HepG2 (cell line): ENCODE measurements at regions of chr1 and their contacts with region 1.

Region 1: GRCh38 chr1:200620273-200621131 is at the start of gene KIF14:
- DNase-seq: peak; percentile 89
- ATAC-seq: peak; percentile 100
- H3K4me3 ChIP-seq: peak within 1 kb of the TSS; percentile 79 to 95 (median 89)
- H3K27ac ChIP-seq: peak within 1 kb of the TSS; percentile 64
- H3K4me1 ChIP-seq: peaks cover 26% of the 10 kb centered on the region
- H3K27me3 ChIP-seq: no peaks in the 10 kb centered on the region; a peak in 1 of 5 replicates
- CTCF ChIP-seq: peak; percentile 7; the same call in 1 of the 2 replicates
- EP300 ChIP-seq: no peak
- POLR2A ChIP-seq: peak; percentile 59 to 61
- RAD21 ChIP-seq: no peak
- total RNA-seq, gene KIF14: 11.2 and 17.5 TPM in 2 replicates

Region 2: DNA sequence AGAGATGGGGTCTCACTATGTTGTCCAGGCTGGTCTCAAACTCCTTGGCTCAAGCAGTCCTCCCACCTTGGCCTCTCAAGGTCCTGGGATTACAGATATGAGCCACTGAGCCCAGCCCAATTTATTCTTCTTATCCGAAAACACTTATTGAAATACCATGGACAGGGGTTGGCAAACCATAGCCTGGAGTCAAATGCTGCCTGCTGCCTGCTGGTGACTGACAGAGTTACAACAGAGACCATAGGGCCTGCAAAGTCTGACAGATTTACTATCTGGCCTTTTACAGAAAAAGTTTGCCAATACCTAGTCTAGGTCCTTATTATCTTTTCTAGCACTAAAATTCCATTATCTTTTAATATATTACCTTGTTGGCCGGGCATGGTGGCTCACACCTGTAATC is 123.6 kb before region 1 on chr1:
- CTCF ChIA-PET with region 1: no interaction called
- POLR2A ChIA-PET with region 1: no interaction called
- in situ Hi-C with region 1: no loop called
- intact Hi-C with region 1: no loop called
- DNase-seq: no peak
- ATAC-seq: no peak
- H3K4me3 ChIP-seq: no peak overlapping the region
- H3K27ac ChIP-seq: no peak overlapping the region
- H3K4me1 ChIP-seq: no peaks in the 10 kb centered on the region
- H3K27me3 ChIP-seq: no peaks in the 10 kb centered on the region; a peak in 1 of 5 replicates
- CTCF ChIP-seq: no peak
- EP300 ChIP-seq: no peak
- POLR2A ChIP-seq: no peak
- RAD21 ChIP-seq: no peak

Region 3: GRCh38 chr1:200669314-200670241 is 49.1 kb after region 1 on chr1 and contains the start of gene DDX59:
- CTCF ChIA-PET with region 1: no interaction called
- POLR2A ChIA-PET with region 1: interaction called, 30 read pairs
- in situ Hi-C with region 1: no loop called
- intact Hi-C with region 1: loop called (anchors 2 kb)
- DNase-seq: peak; percentile 94
- ATAC-seq: peak; percentile 93
- H3K4me3 ChIP-seq: peak within 1 kb of the TSS; percentile 86 to 94 (median 87)
- H3K27ac ChIP-seq: peak within 1 kb of the TSS; percentile 98
- H3K4me1 ChIP-seq: peaks cover 18% of the 10 kb centered on the region
- H3K27me3 ChIP-seq: no peaks in the 10 kb centered on the region
- CTCF ChIP-seq: no peak
- EP300 ChIP-seq: peak in 1 of 2 experiments; percentile 24; a peak in 1 of 4 replicates
- POLR2A ChIP-seq: peak; percentile 46 to 85; a peak in 3 of 4 replicates
- RAD21 ChIP-seq: peak; percentile 21; the same call in 1 of the 2 replicates
- total RNA-seq, gene DDX59: 14.8 and 21.7 TPM in 2 replicates

Region 4: GRCh38 chr1:200802865-200803512 is 182.5 kb after region 1 on chr1:
- CTCF ChIA-PET with region 1: interaction called, 36 read pairs
- POLR2A ChIA-PET with region 1: no interaction called
- in situ Hi-C with region 1: loop called (anchors 5 kb)
- intact Hi-C with region 1: loop called (anchors 1 kb)
- DNase-seq: peak; percentile 71
- ATAC-seq: peak; percentile 95
- H3K4me3 ChIP-seq: no peak overlapping the region
- H3K27ac ChIP-seq: no peak overlapping the region
- H3K4me1 ChIP-seq: no peaks in the 10 kb centered on the region
- H3K27me3 ChIP-seq: no peaks in the 10 kb centered on the region
- CTCF ChIP-seq: peak; percentile 91
- EP300 ChIP-seq: no peak
- POLR2A ChIP-seq: no peak
- RAD21 ChIP-seq: peak; percentile 75

Region 5: GRCh38 chr1:200808846-200809245 is 188.3 kb after region 1 on chr1:
- CTCF ChIA-PET with region 1: interaction called, 36 read pairs
- POLR2A ChIA-PET with region 1: no interaction called
- in situ Hi-C with region 1: loop called (anchors 5 kb)
- intact Hi-C with region 1: no loop called
- DNase-seq: no peak
- ATAC-seq: no peak
- H3K4me3 ChIP-seq: no peak overlapping the region
- H3K27ac ChIP-seq: no peak overlapping the region
- H3K4me1 ChIP-seq: no peaks in the 10 kb centered on the region
- H3K27me3 ChIP-seq: no peaks in the 10 kb centered on the region
- CTCF ChIP-seq: no peak
- EP300 ChIP-seq: no peak
- POLR2A ChIP-seq: no peak
- RAD21 ChIP-seq: no peak

Region 6: GRCh38 chr1:200971955-200972711 is 351.6 kb after region 1 on chr1:
- CTCF ChIA-PET with region 1: no interaction called
- POLR2A ChIA-PET with region 1: no interaction called
- in situ Hi-C with region 1: no loop called
- intact Hi-C with region 1: loop called (anchors 5 kb)
- DNase-seq: peak; percentile 30
- ATAC-seq: peak; percentile 12; the same call in 2 of the 3 replicates
- H3K4me3 ChIP-seq: no peak overlapping the region
- H3K27ac ChIP-seq: no peak overlapping the region
- H3K4me1 ChIP-seq: 0 out of 2 replicates have a peak, but pooled peaks cover 19% of the 10 kb centered on the region
- H3K27me3 ChIP-seq: peaks cover 2 to 6% of the 10 kb centered on the region in 2 experiments; a peak in 4 of 5 replicates
- CTCF ChIP-seq: peak; percentile 67
- EP300 ChIP-seq: no peak
- POLR2A ChIP-seq: no peak
- RAD21 ChIP-seq: 0 out of 2 replicates have a peak, but pooled peaks have one; percentile 27

Region 7: GRCh38 chr1:201042779-201043461 is 422.4 kb after region 1 on chr1:
- CTCF ChIA-PET with region 1: no interaction called
- POLR2A ChIA-PET with region 1: no interaction called
- in situ Hi-C with region 1: loop called (anchors 5 kb)
- intact Hi-C with region 1: loop called (anchors 5 kb)
- DNase-seq: peak; percentile 29
- ATAC-seq: peak; percentile 85
- H3K4me3 ChIP-seq: no peak overlapping the region
- H3K27ac ChIP-seq: no peak overlapping the region
- H3K4me1 ChIP-seq: 0 out of 2 replicates have a peak, but pooled peaks cover 4% of the 10 kb centered on the region
- H3K27me3 ChIP-seq: peaks cover 0 to 5% of the 10 kb centered on the region in 2 experiments; a peak in 2 of 5 replicates
- CTCF ChIP-seq: peak; percentile 89
- EP300 ChIP-seq: no peak
- POLR2A ChIP-seq: no peak
- RAD21 ChIP-seq: peak; percentile 71; the same call in 1 of the 2 replicates